Ovary (tissue), 10 donors: ENCODE measurements at regions of chr3 and their contacts with region 1.

Region 1: DNA sequence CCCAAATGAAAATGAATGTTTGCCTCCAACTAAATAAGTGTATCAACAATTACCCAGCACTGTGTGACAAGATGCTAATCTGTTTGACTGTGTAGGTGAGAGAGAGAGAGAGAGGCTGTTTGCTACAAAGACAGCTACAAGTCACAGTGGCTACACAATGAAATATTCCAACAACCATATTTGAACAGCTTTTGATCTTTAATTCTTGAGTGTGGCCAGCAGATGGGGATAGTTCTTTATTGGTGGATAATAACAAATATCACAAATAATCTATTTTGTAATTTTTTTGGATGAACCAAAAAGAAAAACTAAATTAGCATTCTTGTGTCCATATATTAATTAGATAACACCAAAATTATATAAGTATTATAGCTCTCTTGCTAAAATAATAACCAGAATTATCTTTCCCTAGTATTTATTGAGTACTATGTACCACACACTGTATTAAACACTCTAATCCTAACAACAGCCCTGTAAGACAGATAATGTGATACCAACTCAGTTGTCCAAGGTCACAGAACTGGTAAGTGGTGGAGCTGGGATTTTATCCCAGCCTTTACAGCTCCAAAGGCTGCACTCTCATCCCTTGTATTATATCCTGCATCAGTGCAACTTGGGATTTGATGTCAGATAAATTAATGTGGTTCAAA is 61.9 kb upstream of the C3orf80 start:
- DNase-seq: no peak
- H3K4me3 ChIP-seq: no peak overlapping the region
- H3K27ac ChIP-seq: no peak overlapping the region
- H3K4me1 ChIP-seq: no peaks in the 10 kb centered on the region
- H3K27me3 ChIP-seq: no peaks in the 10 kb centered on the region
- CTCF ChIP-seq: no peak
- EP300 ChIP-seq: no peak
- POLR2A ChIP-seq: no peak

Region 2: GRCh38 chr3:159964166-159964973 is 199.0 kb before region 1 on chr3:
- intact Hi-C with region 1: no loop called
- DNase-seq: no peak
- H3K4me3 ChIP-seq: no peak overlapping the region
- H3K27ac ChIP-seq: no peak overlapping the region
- H3K4me1 ChIP-seq: no peaks in the 10 kb centered on the region
- H3K27me3 ChIP-seq: no peaks in the 10 kb centered on the region
- CTCF ChIP-seq: no peak
- EP300 ChIP-seq: no peak
- POLR2A ChIP-seq: no peak

Region 3: DNA sequence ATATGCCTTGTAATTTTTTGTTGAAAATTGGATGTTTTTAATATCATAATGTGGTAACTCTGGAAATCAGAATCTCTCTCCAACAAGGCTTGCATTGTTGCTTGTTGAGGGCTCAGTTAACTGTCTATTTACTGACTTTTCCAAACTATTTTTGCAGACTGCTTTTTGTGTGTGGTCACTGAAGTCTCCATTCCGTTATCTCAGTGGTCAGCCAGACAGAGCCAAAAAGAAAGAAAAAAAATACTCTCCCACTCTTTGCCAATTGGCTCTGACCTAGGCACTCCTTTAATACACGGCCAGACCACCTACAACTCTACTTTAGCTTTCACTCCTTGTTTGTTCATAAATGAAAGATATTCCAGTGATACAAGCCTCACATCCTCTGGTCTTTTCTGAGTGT is 183.2 kb after region 1 on chr3:
- intact Hi-C with region 1: loop called in 1 of 4 experiments (anchors 5 kb)
- DNase-seq: no peak
- H3K4me3 ChIP-seq: no peak overlapping the region
- H3K27ac ChIP-seq: no peak overlapping the region
- H3K4me1 ChIP-seq: peaks cover 4% of the 10 kb centered on the region
- H3K27me3 ChIP-seq: no peaks in the 10 kb centered on the region
- CTCF ChIP-seq: no peak
- EP300 ChIP-seq: no peak
- POLR2A ChIP-seq: no peak